Head of caudate nucleus (tissue), 42 donors: ENCODE measurements at regions of chr9 and their contacts with region 1.

Region 1: GRCh38 chr9:21402386-21403251 is 6.3 kb upstream of the IFNA8 start:
- DNase-seq: peak in 41 of 42 donors; percentile 23 to 82 (median 57)

Region 2: DNA sequence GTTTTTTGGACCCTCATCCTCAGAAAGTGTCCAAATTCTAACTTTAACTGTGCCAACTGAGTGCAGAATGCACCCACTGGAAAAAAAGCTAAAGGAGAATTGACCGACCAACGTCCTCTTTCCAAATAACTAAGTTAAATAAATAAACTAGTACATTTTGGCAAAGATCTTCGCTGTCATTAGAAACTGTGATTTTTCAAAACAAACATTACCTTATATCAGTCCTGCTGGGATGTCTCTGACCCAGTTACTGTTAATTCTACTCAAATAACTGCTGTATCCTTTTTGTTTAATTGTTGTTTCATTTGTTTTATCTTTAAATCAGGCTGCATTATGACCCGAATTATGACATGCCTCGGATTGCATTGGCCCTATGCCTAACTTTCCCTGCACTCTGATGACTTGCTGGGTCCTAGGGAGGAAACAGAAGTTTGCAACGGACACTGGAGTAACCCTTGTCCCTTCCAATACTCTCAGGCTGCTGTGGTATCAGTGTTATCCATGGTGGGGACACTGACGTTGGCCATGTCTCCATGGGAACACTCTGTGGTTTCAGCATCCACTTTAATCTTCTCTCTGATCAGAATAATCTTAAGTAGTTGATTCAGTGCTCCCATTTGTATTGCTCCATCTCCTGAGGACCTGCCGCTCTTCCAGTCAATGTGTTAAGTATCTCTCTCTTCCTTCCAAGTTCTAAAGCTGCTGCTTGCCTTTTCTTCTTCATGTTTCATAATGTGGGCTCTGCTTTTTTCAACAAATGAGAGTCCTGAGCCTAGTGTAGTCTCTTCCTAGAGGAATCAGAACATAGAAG is 86.4 kb before region 1 on chr9:
- intact Hi-C with region 1: no loop called
- DNase-seq: no peak

Region 3: GRCh38 chr9:21334701-21335632 is 67.7 kb before region 1 on chr9 and contains the start of gene KLHL9:
- intact Hi-C with region 1: loop called (anchors 2 kb)
- DNase-seq: peak; percentile 86 to 98 (median 94)

Region 4: DNA sequence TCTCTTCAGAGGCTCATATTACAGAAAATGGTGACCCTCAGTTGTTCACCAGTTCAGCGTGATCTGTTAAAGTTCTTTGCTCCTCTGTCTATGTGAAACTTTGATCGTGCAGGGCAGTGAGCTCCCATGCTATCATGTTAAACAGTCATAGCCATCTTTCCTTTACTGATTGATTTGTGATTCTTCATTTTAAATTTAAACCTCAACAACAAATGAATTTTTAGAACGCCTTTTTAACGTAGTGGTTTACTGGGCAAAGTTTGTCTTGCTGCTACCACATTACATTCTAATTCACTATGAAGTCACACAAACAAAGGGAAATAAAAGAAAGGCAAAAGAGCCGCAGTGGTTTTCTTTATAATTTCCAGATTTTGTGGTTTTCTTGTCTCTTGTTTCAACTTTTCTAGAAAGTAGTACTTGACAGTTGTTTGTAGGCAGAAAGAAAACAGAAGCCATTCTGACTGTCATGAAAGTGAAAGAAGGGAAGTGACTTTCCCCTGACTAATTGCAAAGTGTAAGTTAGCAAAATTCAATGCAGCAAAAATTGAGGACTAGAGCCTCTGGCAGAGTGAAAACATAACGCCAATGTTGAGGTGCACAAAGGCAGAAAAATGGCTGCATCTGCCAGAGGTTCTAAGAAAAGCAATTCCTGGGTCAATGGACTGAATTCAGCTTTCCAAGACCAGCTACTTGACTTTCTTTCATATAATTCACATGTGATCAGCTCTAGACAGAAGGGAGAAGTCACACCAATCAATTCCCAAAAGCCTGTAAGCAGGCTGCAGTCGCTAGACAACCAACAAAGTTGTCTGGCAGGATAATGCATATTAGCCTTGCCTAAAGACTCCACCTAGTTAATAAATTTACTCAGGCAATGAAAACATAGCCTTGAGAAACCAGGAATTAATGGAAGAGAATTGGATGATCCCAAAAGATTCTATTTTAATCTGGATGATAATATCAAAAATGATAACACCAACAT is 44.8 kb before region 1 on chr9:
- intact Hi-C with region 1: no loop called
- DNase-seq: no peak